ENCODE measurements at regions of chr4 and their contacts with region 1.

Region 1: DNA sequence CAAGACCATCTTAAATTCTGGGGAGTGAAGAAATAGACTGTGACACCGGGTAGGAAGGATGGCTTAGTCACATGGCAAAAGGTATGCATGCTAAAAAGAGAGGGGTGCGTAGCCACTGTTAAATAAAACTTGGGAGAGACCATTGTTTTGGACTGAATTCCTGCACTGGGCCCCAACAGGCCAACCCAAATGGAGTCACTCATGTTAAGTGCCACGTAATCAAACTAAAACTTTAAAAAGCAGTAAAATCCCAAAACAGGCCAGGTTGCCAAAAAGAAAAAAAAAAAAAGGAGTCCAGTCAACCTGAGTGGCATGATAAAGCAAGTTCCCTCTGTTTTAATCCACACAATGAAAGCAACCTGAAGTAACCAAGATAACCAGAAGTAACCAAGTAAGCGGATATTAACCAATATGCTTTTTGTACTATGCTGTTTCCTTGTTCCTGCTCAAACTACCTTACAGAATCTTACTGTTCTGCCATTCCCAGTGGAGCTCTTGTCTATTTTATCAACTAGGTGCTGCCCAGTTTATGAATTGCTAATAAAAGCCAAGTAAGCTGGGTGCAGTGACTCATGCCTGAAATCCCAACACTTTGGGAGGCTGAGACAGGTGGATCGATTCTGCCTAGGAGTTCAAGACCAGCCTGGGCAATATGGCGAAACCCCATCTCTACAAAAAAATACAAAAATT is 124.6 kb upstream of the ENPP6 start:
- DNase-seq: no peak
- H3K4me3 Mint-ChIP-seq: no peak overlapping the region
- H3K27ac Mint-ChIP-seq: peak overlapping the region; percentile 3
- H3K4me1 Mint-ChIP-seq: peaks cover 24% of the 10 kb centered on the region
- H3K27me3 Mint-ChIP-seq: no peaks in the 10 kb centered on the region

Region 2: GRCh38 chr4:184310171-184310567 is 32.1 kb before region 1 on chr4:
- CTCF ChIA-PET with region 1: no interaction called
- POLR2A ChIA-PET with region 1: no interaction called
- DNase-seq: peak; percentile 51
- H3K4me3 Mint-ChIP-seq: no peak overlapping the region
- H3K27ac Mint-ChIP-seq: peak overlapping the region; percentile 69
- H3K4me1 Mint-ChIP-seq: peaks cover 62% of the 10 kb centered on the region
- H3K27me3 Mint-ChIP-seq: no peaks in the 10 kb centered on the region

Region 3: GRCh38 chr4:184328022-184328736 is 14.1 kb before region 1 on chr4:
- CTCF ChIA-PET with region 1: interaction called, 10 read pairs
- POLR2A ChIA-PET with region 1: no interaction called
- DNase-seq: no peak
- H3K4me3 Mint-ChIP-seq: no peak overlapping the region
- H3K27ac Mint-ChIP-seq: peak overlapping the region; percentile 31
- H3K4me1 Mint-ChIP-seq: peaks cover 19% of the 10 kb centered on the region
- H3K27me3 Mint-ChIP-seq: no peaks in the 10 kb centered on the region

Region 4: GRCh38 chr4:184375027-184375426 is 32.7 kb after region 1 on chr4:
- CTCF ChIA-PET with region 1: no interaction called
- POLR2A ChIA-PET with region 1: no interaction called
- DNase-seq: no peak
- H3K4me3 Mint-ChIP-seq: no peak overlapping the region
- H3K27ac Mint-ChIP-seq: no peak overlapping the region
- H3K4me1 Mint-ChIP-seq: peaks cover 20% of the 10 kb centered on the region
- H3K27me3 Mint-ChIP-seq: no peaks in the 10 kb centered on the region

Region 5: GRCh38 chr4:184453365-184454160 is 111.3 kb after region 1 on chr4:
- CTCF ChIA-PET with region 1: no interaction called
- POLR2A ChIA-PET with region 1: no interaction called
- DNase-seq: peak; percentile 57
- H3K4me3 Mint-ChIP-seq: peak overlapping the region; percentile 8
- H3K27ac Mint-ChIP-seq: peak overlapping the region; percentile 80
- H3K4me1 Mint-ChIP-seq: peaks cover 80% of the 10 kb centered on the region
- H3K27me3 Mint-ChIP-seq: no peaks in the 10 kb centered on the region

Measured in activated CD4-positive, alpha-beta T cell treated with anti-CD3 and anti-CD28 coated beads, Interleukin-2, amount 10 ng/mL, durations not matched to agents 7 days and 5 days (primary cell).